ENCODE measurements at regions of chr10 and their contacts with region 1.

Region 1: DNA sequence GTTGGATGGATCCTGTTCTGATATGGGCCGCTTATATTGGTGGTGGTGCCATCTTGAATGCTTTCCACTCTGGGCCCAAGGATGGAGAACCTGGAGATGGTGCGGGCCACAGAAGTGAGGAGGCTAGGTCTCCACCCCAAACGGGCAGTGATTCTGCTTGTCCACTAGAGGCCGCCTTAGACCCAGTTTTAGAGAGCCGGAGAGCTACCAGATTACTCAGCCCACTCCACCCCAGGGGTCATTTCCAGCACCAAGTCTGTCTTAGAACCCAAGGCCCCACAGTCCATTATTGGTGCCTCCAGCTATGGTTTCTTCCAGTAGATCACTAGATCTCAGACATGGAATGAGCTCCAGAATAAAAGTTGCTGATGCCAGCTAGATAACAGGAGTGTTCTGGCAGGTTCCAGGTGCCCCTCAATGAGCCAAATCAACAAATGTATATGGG is 11.8 kb upstream of the CAMK2G start:
- DNase-seq: peak; percentile 83
- ATAC-seq: peak; percentile 98
- H3K4me3 ChIP-seq: no peak overlapping the region
- H3K4me3 Mint-ChIP-seq: no peak overlapping the region
- H3K27ac ChIP-seq: no peak overlapping the region
- H3K27ac Mint-ChIP-seq: no peak overlapping the region
- H3K4me1 ChIP-seq: peaks cover 4 to 19% of the 10 kb centered on the region in 2 donors
- H3K4me1 Mint-ChIP-seq: peaks cover 9% of the 10 kb centered on the region
- H3K27me3 ChIP-seq: no peaks in the 10 kb centered on the region
- H3K27me3 Mint-ChIP-seq: no peaks in the 10 kb centered on the region
- CTCF ChIP-seq: peak; percentile 85

Region 2: DNA sequence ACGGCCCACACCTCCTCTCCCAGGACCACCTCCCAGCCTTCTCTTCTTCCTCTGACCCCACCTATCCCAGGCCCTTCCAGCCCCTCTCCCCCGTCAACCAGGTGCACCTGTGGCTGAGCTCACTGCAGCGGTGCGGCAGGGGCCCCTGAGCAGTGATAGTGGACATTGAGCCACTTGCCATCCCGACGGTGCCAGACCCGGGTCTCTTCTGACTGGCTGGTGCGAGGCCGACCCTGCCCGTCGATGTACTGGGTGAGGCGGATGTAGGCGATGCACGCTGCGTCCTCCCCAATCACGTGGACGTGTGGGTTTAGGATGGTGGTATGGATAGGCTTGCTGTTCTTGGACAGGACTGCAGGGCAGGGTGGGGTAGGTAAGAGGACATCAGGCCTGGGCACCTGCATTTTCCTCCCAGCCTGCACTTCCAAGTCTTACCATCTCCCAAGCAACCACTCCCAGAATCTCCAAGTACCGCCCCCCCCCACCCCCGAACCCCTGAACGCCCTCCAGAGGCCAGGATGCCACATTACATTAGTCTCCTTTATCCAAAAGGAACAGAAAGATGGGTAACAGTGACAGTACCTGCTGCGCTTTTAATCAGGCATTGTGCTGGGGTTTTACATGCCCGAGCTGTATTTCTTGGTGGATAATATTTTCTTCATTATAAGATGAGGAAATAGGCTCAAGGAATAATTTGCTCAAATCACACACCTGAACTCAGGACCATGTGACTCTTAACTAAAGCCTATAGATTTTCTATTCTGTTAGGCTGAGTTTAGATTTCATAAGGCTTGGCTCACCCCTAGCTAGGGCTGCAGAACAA is 71.0 kb before region 1 on chr10:
- CTCF ChIA-PET with region 1: no interaction called
- POLR2A ChIA-PET with region 1: no interaction called
- intact Hi-C with region 1: no loop called
- DNase-seq: no peak
- ATAC-seq: no peak
- H3K4me3 ChIP-seq: no peak overlapping the region
- H3K4me3 Mint-ChIP-seq: no peak overlapping the region
- H3K27ac ChIP-seq: no peak overlapping the region
- H3K27ac Mint-ChIP-seq: no peak overlapping the region
- H3K4me1 ChIP-seq: peaks cover 4 to 11% of the 10 kb centered on the region in 2 donors
- H3K4me1 Mint-ChIP-seq: peaks cover 6% of the 10 kb centered on the region
- H3K27me3 ChIP-seq: no peaks in the 10 kb centered on the region
- H3K27me3 Mint-ChIP-seq: no peaks in the 10 kb centered on the region
- CTCF ChIP-seq: peak; percentile 45

Region 3: DNA sequence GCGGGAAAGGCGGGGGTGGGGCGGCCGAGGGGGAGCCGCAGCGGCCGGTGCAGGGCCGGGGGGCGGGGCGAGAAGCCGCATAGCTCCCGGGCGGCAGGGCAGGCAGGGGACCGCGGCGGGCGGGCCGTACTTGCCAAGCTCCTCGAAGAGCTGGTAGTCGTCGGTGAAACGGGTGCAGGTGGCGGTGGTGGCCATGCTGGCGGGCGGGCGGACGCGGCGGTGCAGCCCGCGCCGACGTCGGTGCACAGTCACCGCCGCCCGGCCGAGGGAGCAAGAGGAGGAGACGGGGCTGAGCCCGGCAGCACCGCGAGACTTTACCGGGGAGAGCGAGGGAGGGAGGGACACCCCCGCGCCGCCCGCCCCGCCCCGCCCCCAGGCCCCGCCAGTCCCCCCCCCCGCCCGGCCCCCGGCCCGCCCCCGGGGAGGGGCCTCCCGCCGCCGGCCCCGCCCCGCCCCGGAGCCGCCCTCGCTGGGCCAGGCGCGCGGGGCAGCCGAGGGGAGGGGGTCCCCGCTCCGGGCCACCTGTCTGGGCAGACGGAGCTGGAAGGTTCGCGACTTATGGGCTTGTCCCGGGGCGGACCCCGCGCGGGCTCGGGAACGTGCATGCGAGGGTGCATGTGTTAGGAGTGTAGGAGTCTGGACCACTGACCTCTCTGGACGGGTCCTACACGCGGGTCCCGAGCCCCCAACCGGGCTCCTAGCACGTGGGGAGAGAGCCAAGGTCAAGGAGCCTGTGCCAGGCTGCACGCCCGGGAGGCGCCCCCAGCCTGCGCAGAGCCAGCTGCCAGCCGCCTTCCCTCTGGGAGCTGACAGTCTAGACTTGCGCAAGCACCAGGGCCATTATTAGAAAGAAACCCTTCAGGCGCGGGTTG is 11.6 kb before region 1 on chr10 and contains the start of gene CAMK2G:
- CTCF ChIA-PET with region 1: interaction called, 102 read pairs
- POLR2A ChIA-PET with region 1: no interaction called
- intact Hi-C with region 1: no loop called
- DNase-seq: peak; percentile 92
- ATAC-seq: peak; percentile 87
- H3K4me3 ChIP-seq: peak within 1 kb of the TSS; percentile 81 to 98 (median 92)
- H3K4me3 Mint-ChIP-seq: peak within 1 kb of the TSS; percentile 95
- H3K27ac ChIP-seq: peak within 1 kb of the TSS; percentile 71 to 74
- H3K27ac Mint-ChIP-seq: peak within 1 kb of the TSS; percentile 85
- H3K4me1 ChIP-seq: peaks cover 18 to 39% of the 10 kb centered on the region in 2 donors
- H3K4me1 Mint-ChIP-seq: peaks cover 46% of the 10 kb centered on the region
- H3K27me3 ChIP-seq: no peaks in the 10 kb centered on the region
- H3K27me3 Mint-ChIP-seq: no peaks in the 10 kb centered on the region
- CTCF ChIP-seq: no peak
- total RNA-seq, gene CAMK2G: 42.7 and 45.1 TPM in 2 replicates

Region 4: DNA sequence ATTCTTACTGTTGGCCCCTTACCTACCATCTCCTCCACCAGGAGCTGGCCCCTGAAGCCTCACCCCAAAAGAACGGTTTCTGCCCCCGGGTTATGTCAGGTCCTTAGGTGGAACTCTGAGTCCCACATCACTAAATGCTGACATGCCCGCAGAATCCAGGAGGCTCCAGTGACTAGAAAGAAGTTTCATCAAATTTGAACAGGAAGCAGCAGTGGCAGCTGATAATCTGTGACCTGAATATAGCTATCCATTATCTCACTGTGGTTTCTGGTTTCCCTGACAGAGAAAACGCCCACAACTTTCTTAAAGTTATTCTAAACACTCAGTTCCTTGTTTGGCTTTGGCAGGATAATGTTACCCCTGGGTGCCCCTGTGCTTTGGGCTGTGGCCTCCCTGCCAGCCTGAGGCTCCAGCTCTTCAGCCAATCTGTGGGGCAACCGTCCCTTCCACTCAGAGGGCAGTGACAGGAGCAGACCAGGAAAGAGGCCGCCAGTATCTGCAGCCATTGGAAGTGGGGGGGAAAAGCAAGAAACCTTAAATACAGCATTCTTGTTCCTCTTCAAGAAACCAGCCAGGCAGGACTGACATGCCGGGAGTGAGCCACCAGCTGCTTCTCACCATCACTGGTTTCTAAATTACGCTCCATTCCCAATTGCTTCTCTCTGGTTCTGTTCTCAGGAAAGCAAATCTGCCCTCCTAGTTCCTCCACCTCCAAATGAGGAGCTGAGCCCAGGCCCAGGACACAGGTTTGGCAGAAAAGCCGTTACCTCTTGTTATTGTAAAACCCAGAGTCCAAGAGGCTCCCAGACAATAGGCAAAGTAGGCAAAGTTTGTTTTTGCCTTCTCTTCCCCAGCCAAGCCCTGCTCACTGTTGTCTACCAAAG is 70.6 kb after region 1 on chr10:
- CTCF ChIA-PET with region 1: interaction called, 44 read pairs
- POLR2A ChIA-PET with region 1: interaction called, 7 read pairs
- intact Hi-C with region 1: loop called (anchors 1 kb)
- DNase-seq: peak; percentile 82
- ATAC-seq: peak; percentile 61
- H3K4me3 ChIP-seq: peak overlapping the region; percentile 13 to 42 (median 24)
- H3K4me3 Mint-ChIP-seq: peak overlapping the region; percentile 83
- H3K27ac ChIP-seq: peak overlapping the region; percentile 92 to 93
- H3K27ac Mint-ChIP-seq: peak overlapping the region; percentile 99
- H3K4me1 ChIP-seq: peaks cover 50 to 54% of the 10 kb centered on the region in 2 donors
- H3K4me1 Mint-ChIP-seq: peaks cover 56% of the 10 kb centered on the region
- H3K27me3 ChIP-seq: no peaks in the 10 kb centered on the region
- H3K27me3 Mint-ChIP-seq: no peaks in the 10 kb centered on the region
- CTCF ChIP-seq: no peak

Region 5: DNA sequence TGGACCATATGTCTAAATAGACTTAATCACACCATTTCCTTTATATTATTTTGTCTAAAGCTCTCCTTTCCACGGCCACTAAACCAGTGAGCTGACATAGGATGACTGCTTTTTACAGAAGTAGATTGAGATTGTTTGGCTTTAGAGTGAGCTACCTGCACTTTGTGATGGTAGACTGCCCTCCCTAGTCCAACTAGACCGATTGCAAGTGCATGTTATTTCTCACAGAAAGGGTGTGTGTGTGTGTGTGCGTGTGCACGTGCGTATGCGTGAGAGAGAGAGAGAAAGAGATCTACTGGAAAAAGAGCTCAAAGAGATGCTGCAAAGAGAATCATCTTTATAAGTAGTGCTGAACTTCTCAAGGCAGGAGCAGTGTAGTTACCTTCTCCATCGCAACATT is 172.6 kb after region 1 on chr10:
- CTCF ChIA-PET with region 1: interaction called, 36 read pairs
- POLR2A ChIA-PET with region 1: no interaction called
- intact Hi-C with region 1: loop called (anchors 1 kb)
- DNase-seq: peak; percentile 71
- ATAC-seq: peak; percentile 79
- H3K4me3 ChIP-seq: no peak overlapping the region
- H3K4me3 Mint-ChIP-seq: no peak overlapping the region
- H3K27ac ChIP-seq: no peak overlapping the region
- H3K27ac Mint-ChIP-seq: peak overlapping the region; percentile 8
- H3K4me1 ChIP-seq: peaks cover 12 to 13% of the 10 kb centered on the region in 2 donors
- H3K4me1 Mint-ChIP-seq: peaks cover 24% of the 10 kb centered on the region
- H3K27me3 ChIP-seq: no peaks in the 10 kb centered on the region
- H3K27me3 Mint-ChIP-seq: no peaks in the 10 kb centered on the region
- CTCF ChIP-seq: peak; percentile 34

Region 6: DNA sequence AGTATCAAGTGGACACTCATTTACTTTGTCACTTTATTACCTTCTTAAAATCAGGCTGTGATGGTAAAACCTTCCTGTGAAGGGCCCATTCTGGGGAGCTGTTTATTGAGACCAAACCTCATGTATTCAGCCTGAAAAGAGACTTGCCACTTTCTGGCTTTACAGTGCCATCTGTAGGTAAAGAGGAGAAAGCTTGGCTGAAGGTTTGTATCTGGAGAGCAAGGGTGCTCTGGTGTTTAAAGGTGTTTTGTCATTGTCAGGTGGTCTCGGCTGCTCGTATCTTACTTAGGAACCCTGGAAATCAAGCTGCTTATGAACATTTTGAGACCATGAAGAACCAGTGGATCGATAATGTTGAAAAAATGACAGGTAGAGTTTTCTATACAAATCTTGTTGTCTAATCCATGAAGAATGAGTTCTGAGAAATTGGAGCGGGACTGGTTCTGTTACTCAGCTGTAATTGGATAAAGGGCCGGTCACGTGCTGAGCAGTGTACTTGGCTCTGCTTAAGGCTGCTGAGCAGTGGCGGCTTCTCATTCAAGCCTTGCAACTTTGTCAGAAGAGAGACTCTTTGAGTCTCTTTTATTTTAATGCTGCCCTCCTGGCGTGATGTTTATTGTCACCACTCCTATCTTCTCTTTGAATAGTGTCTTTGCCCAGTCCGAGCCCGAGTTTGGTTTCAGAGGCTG is 217.6 kb after region 1 on chr10:
- CTCF ChIA-PET with region 1: interaction called, 29 read pairs
- POLR2A ChIA-PET with region 1: no interaction called
- intact Hi-C with region 1: loop called (anchors 1 kb)
- DNase-seq: peak; percentile 26
- ATAC-seq: no peak
- H3K4me3 ChIP-seq: no peak overlapping the region
- H3K4me3 Mint-ChIP-seq: no peak overlapping the region
- H3K27ac ChIP-seq: no peak overlapping the region
- H3K27ac Mint-ChIP-seq: no peak overlapping the region
- H3K4me1 ChIP-seq: no peaks in the 10 kb centered on the region
- H3K4me1 Mint-ChIP-seq: peaks cover 2% of the 10 kb centered on the region
- H3K27me3 ChIP-seq: no peaks in the 10 kb centered on the region
- H3K27me3 Mint-ChIP-seq: no peaks in the 10 kb centered on the region
- CTCF ChIP-seq: peak; percentile 9

Region 7: DNA sequence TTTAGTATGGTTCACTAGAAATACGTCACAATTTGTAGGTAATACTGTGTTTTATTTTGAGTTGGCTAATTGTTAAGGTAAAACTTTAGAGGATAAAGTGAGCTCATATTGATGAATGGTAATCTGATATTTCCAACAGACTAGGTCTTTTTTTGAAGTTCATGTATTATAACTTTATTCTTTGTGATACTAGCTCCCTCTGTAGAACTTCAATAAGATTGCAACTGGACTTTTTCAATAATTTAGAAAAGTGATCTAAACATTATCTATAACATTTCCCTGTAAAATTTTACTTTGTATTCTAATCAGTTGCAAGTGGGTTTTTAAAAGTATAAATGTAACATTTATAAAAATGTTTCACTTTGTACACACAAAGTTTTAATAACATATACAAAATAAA is 348.5 kb after region 1 on chr10:
- CTCF ChIA-PET with region 1: interaction called, 11 read pairs
- POLR2A ChIA-PET with region 1: interaction called, 11 read pairs
- intact Hi-C with region 1: loop called (anchors 2 kb)
- DNase-seq: no peak
- ATAC-seq: no peak
- H3K4me3 ChIP-seq: no peak overlapping the region
- H3K4me3 Mint-ChIP-seq: no peak overlapping the region
- H3K27ac ChIP-seq: peak overlapping the region in 1 of 2 donors; percentile 12
- H3K27ac Mint-ChIP-seq: no peak overlapping the region
- H3K4me1 ChIP-seq: peaks cover 0 to 2% of the 10 kb centered on the region in 2 donors
- H3K4me1 Mint-ChIP-seq: peaks cover 18% of the 10 kb centered on the region
- H3K27me3 ChIP-seq: no peaks in the 10 kb centered on the region
- H3K27me3 Mint-ChIP-seq: no peaks in the 10 kb centered on the region
- CTCF ChIP-seq: peak; percentile 63

Region 8: DNA sequence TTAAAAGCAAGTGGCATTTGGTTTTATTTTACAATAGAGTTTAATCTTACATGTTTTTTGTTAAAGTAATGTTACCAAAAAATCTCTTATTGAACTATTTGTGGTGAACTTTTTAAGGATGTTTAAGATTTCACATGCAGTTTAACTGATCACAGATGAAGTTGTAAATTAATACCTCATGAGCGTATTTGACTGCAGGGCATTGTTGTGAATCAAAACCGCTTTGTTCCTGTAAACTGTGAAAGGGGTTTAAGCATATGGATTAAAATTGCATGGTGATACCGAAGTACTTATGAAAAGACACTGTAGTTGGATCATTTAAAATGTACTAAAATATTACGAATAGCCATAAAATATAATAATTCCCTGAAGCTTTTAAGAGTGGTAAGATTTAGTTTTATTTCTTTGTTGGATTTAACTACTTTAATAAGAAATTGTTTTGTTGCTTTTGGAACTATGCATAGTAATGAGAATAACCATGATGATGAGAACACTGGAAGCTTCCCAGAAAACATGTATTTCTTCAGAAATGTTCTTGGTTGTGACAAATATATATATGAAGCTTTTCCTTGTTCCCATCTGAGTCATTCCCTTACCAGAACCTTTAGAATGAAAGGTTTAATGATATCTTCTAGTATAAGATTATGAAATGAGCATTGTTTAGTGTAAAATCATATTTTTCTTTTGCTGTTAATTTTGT is 396.2 kb after region 1 on chr10:
- CTCF ChIA-PET with region 1: no interaction called
- POLR2A ChIA-PET with region 1: no interaction called
- intact Hi-C with region 1: no loop called
- DNase-seq: no peak
- ATAC-seq: no peak
- H3K4me3 ChIP-seq: no peak overlapping the region
- H3K4me3 Mint-ChIP-seq: no peak overlapping the region
- H3K27ac ChIP-seq: no peak overlapping the region
- H3K27ac Mint-ChIP-seq: no peak overlapping the region
- H3K4me1 ChIP-seq: peaks cover 0 to 3% of the 10 kb centered on the region in 2 donors
- H3K4me1 Mint-ChIP-seq: peaks cover 11% of the 10 kb centered on the region
- H3K27me3 ChIP-seq: no peaks in the 10 kb centered on the region
- H3K27me3 Mint-ChIP-seq: no peaks in the 10 kb centered on the region
- CTCF ChIP-seq: no peak